ENCODE measurements at regions of chr17 and their contacts with region 1.

Region 1: GRCh38 chr17:32783602-32784001 is 93.3 kb downstream of the MYO1D start:
- DNase-seq: no peak
- H3K4me3 ChIP-seq: no peak overlapping the region
- H3K27ac ChIP-seq: peak overlapping the region; percentile 62 to 76 (median 66)
- H3K4me1 ChIP-seq: peaks cover 0 to 18% (median 6%) of the 10 kb centered on the region in 4 donors
- H3K27me3 ChIP-seq: no peaks in the 10 kb centered on the region
- CTCF ChIP-seq: peak; percentile 73 to 91 (median 77)
- EP300 ChIP-seq: no peak
- POLR2A ChIP-seq: no peak

Region 2: DNA sequence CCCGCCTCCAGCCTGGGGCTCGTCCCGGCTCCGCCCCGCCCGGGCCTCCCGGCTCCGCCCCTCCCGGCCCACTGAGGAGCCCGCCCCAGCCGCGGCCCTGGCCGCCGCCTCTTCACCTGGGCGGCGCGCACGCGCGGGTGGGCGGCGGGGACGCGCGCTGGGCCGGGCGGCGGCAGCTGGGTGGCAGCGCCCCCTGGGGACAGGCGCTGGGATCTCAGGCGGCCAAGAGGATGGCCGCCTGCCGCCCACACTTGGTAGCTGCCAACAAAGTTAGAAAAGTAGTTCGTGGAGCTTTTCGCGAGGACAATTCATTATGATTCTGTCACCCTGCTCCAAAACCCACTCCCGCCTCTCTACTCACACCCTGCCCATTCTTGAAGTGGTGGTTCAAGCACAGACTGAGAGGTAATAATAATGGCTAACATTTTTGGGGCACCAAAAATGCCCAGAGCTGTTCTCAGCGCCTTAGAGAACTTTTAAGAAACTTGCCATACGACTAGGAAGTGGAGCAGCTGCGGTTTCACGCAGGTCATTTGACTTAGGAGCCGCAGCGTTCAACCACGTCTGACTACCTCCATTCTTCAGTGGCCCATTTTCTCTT is 93.7 kb after region 1 on chr17:
- in situ Hi-C with region 1: loop called in 2 of 4 experiments (anchors 10 kb)
- intact Hi-C with region 1: loop called (anchors 5 kb)
- DNase-seq: peak; percentile 96
- H3K4me3 ChIP-seq: peak overlapping the region in 3 of 4 donors; percentile 77 to 99 (median 96)
- H3K27ac ChIP-seq: peak overlapping the region; percentile 92 to 97 (median 94)
- H3K4me1 ChIP-seq: peaks cover 11 to 47% (median 24%) of the 10 kb centered on the region in 4 donors
- H3K27me3 ChIP-seq: no peaks in the 10 kb centered on the region
- CTCF ChIP-seq: peak; percentile 82 to 94 (median 88)
- EP300 ChIP-seq: no peak
- POLR2A ChIP-seq: no peak

Region 3: DNA sequence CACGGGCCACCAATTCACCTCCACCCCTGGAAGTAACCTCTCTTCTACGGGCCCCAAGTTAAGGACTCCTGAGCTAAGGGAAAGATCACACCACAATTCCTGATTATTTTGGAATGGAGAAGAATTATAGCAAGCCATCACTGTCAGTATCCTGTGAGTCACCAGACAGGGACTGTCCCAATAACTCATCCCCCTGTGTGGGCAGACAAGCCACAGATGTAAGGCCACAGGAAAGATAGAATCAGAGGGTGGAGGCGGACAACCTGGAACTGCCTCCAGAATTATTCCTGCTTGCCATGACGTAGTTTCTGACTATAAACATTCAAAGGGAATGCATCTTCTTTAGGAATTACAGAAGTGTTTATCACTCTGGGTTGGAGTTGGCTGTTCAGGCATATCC is 99.1 kb after region 1 on chr17:
- in situ Hi-C with region 1: loop called in 2 of 4 experiments (anchors 10 kb)
- intact Hi-C with region 1: loop called (anchors 5 kb)
- DNase-seq: no peak
- H3K4me3 ChIP-seq: no peak overlapping the region
- H3K27ac ChIP-seq: no peak overlapping the region
- H3K4me1 ChIP-seq: peaks cover 6 to 10% (median 8%) of the 10 kb centered on the region in 4 donors
- H3K27me3 ChIP-seq: no peaks in the 10 kb centered on the region
- CTCF ChIP-seq: no peak
- EP300 ChIP-seq: no peak
- POLR2A ChIP-seq: no peak

Region 4: GRCh38 chr17:32909787-32910369 is 126.3 kb after region 1 on chr17:
- in situ Hi-C with region 1: loop called in 2 of 4 experiments (anchors 25 kb)
- intact Hi-C with region 1: no loop called
- DNase-seq: peak; percentile 91
- H3K4me3 ChIP-seq: no peak overlapping the region
- H3K27ac ChIP-seq: peak overlapping the region; percentile 69 to 83 (median 77)
- H3K4me1 ChIP-seq: peaks cover 15 to 49% (median 31%) of the 10 kb centered on the region in 4 donors
- H3K27me3 ChIP-seq: no peaks in the 10 kb centered on the region
- CTCF ChIP-seq: peak; percentile 71 to 90 (median 79)
- EP300 ChIP-seq: no peak
- POLR2A ChIP-seq: no peak

Region 5: GRCh38 chr17:32997753-32998632 is 214.4 kb after region 1 on chr17:
- in situ Hi-C with region 1: no loop called
- intact Hi-C with region 1: loop called (anchors 10 kb)
- DNase-seq: peak; percentile 87
- H3K4me3 ChIP-seq: no peak overlapping the region
- H3K27ac ChIP-seq: no peak overlapping the region
- H3K4me1 ChIP-seq: peaks cover 0 to 12% (median 4%) of the 10 kb centered on the region in 4 donors
- H3K27me3 ChIP-seq: peaks cover 10% of the 10 kb centered on the region
- CTCF ChIP-seq: peak; percentile 84 to 93 (median 90)
- EP300 ChIP-seq: no peak
- POLR2A ChIP-seq: no peak

Measured in transverse colon (tissue), 4 donors.